ENCODE measurements at regions of chr22 and their contacts with region 1.

Region 1: GRCh38 chr22:49936018-49936952 is 17.9 kb downstream of the CRELD2 start:
- DNase-seq: peak; percentile 96
- H3K4me3 Mint-ChIP-seq: peak overlapping the region; percentile 28
- H3K27ac Mint-ChIP-seq: no peak overlapping the region
- H3K4me1 Mint-ChIP-seq: peaks cover 11% of the 10 kb centered on the region
- H3K27me3 Mint-ChIP-seq: no peaks in the 10 kb centered on the region
- CTCF ChIP-seq: no peak

Region 2: DNA sequence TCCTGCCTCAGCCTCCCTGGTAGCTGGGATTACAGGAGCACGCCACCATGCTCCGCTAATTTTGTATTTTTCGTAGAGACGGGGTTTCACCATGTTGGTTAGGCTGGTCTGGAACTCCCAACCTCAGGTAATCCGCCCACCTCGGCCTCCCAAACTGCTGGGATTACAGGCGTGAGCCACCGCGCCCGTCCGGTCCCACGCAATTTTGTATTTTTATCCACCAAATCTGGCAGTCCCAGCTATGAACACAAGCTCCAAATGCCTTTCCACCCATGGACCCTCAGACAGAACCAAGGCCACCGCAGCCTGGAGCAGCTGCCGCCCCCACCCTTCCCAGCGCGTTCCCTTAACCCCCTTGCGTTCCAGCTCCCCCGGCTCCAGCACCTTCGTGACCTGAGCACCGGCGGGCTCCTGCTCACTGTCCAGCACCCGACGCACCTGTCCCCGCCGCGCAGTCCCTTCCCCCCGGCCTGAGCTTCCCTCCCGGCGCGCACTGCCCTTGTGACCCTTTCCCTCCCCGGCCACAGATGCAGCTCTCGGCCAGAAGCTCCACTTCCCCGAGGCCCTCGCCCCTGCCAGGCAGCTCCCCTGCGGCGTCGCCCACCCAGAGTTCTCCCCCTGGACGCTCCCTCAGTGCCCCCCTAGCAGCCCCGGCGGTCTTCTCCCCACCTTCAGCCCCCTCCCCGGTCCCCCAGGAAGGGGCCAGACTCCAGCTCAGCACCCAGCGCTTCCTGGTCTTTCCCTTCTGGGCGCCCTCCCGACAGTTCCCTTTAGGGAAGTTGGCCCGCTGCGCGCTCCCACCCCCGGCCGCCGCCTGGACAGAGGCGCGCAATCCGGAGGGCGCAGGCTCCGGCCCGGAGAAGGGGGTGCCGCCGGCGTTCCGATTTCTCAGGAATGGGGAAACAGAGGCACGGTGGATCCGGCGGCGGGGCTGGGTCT is 88.3 kb before region 1 on chr22:
- CTCF ChIA-PET with region 1: no interaction called
- POLR2A ChIA-PET with region 1: no interaction called
- intact Hi-C with region 1: no loop called
- DNase-seq: no peak
- H3K4me3 Mint-ChIP-seq: no peak overlapping the region
- H3K27ac Mint-ChIP-seq: no peak overlapping the region
- H3K4me1 Mint-ChIP-seq: no peaks in the 10 kb centered on the region
- H3K27me3 Mint-ChIP-seq: no peaks in the 10 kb centered on the region
- CTCF ChIP-seq: no peak

Region 3: GRCh38 chr22:49924113-49924833 is 12.0 kb before region 1 on chr22:
- CTCF ChIA-PET with region 1: no interaction called
- POLR2A ChIA-PET with region 1: no interaction called
- intact Hi-C with region 1: no loop called
- DNase-seq: no peak
- H3K4me3 Mint-ChIP-seq: no peak overlapping the region
- H3K27ac Mint-ChIP-seq: no peak overlapping the region
- H3K4me1 Mint-ChIP-seq: no peaks in the 10 kb centered on the region
- H3K27me3 Mint-ChIP-seq: no peaks in the 10 kb centered on the region
- CTCF ChIP-seq: no peak

Region 4: DNA sequence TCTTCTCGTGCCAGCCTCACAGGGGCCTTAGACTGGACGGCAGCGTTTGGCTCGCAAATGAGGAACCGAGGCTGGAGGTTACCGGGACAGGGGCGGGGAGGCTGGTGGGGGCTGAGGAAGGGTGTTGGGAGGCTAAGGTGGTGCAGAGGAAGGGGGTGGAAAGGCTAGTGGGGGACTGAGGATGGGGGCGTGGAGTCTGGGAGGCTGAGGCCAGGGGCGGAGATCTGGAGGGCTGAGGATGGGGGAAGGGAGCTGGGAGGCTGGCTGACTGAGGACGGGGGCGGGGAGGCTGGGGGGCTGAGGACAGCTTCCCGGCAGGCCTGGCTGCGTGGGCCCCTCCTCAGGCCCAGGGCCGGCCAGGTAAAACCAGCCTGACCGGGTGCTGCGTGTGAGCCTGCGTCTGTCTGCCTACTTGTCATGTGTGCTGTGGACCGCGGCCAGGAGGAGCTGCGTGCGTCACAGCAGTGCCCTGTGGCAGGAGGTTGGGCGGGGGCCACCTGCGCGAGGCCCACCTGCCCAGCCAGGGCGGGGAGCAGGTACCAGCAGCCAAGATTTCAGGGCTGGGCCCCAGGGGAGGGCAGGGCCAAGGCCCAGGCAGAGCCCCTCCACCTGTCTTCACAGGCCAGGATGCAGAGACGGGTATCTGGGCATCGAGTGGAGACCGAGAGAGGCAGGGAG is 14.9 kb after region 1 on chr22:
- CTCF ChIA-PET with region 1: interaction called, 16 read pairs
- POLR2A ChIA-PET with region 1: interaction called, 16 read pairs
- intact Hi-C with region 1: no loop called
- DNase-seq: peak; percentile 90
- H3K4me3 Mint-ChIP-seq: peak overlapping the region; percentile 29
- H3K27ac Mint-ChIP-seq: peak overlapping the region; percentile 88
- H3K4me1 Mint-ChIP-seq: peaks cover 24% of the 10 kb centered on the region
- H3K27me3 Mint-ChIP-seq: no peaks in the 10 kb centered on the region
- CTCF ChIP-seq: no peak

Region 5: GRCh38 chr22:49960159-49961004 is 24.1 kb after region 1 on chr22 and contains the start of gene PIM3:
- CTCF ChIA-PET with region 1: interaction called, 12 read pairs
- POLR2A ChIA-PET with region 1: interaction called, 65 read pairs
- intact Hi-C with region 1: loop called (anchors 1 kb)
- DNase-seq: peak; percentile 96
- H3K4me3 Mint-ChIP-seq: peak within 1 kb of the TSS; percentile 90
- H3K27ac Mint-ChIP-seq: peak within 1 kb of the TSS; percentile 77
- H3K4me1 Mint-ChIP-seq: peaks cover 19% of the 10 kb centered on the region
- H3K27me3 Mint-ChIP-seq: no peaks in the 10 kb centered on the region
- CTCF ChIP-seq: no peak
- total RNA-seq, gene PIM3: 56.3 and 73.5 TPM in 2 replicates